ENCODE measurements at regions of chr11 and their contacts with region 1.

Region 1: DNA sequence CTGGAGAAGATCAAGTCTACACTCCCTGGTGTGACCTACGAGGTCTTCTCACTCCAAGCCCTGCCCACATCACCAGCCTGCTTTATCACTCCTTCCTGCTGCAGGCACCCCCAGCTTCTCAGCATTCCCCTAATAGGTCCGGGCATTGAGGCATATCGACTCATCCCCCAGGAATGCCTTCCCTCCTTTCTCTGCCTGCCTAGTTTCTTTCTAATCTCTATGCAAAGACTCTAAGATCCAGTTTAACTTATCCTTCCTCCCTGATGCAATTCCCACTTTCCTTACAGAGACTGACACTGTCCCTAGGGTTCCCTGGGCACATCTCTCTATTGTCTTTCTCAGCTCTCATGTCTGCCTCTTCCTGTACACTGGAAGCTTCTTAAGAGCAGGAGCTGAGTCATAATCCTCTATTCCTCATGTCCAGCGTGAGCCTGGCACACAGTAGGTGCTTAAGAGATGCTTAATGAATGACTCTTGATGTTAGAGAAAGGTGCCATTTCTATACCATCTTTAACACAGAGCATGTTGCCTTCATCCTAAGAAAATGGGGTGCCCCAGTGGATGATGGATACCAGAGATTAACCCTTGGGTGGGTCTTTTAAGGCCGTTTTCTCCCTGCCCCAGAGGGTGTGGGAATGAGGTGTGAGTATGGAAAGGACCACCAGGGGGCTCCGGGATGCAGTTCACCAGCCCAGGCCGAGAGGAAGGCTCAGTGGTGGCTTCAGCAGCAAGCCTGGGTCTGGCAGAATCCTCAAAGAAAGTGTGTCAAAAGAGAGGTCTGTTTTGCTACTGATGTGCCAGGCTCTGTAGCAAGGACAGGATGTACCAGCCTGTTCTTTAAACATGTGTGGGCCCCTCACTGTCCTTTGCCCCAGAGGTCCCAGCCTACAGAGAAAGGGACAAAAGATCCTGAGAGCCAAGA is 34.7 kb downstream of the PARVA start:
- DNase-seq: no peak
- H3K4me3 ChIP-seq: no peak overlapping the region
- H3K27ac ChIP-seq: peak overlapping the region; percentile 42 to 64
- H3K4me1 ChIP-seq: no peaks in the 10 kb centered on the region
- H3K27me3 ChIP-seq: no peaks in the 10 kb centered on the region
- CTCF ChIP-seq: peak; percentile 34 to 70 (median 66)
- POLR2A ChIP-seq: no peak

Region 2: GRCh38 chr11:12377824-12378593 is 34.1 kb before region 1 on chr11:
- intact Hi-C with region 1: loop called (anchors 5 kb)
- DNase-seq: peak; percentile 58
- H3K4me3 ChIP-seq: peak overlapping the region; percentile 68 to 77
- H3K27ac ChIP-seq: peak overlapping the region; percentile 95 to 97
- H3K4me1 ChIP-seq: no peaks in the 10 kb centered on the region
- H3K27me3 ChIP-seq: no peaks in the 10 kb centered on the region
- CTCF ChIP-seq: peak in 2 of 4 experiments; percentile 26 to 42
- POLR2A ChIP-seq: no peak

Region 3: GRCh38 chr11:12598330-12599256 is 186.5 kb after region 1 on chr11:
- intact Hi-C with region 1: no loop called
- DNase-seq: no peak
- H3K4me3 ChIP-seq: no peak overlapping the region
- H3K27ac ChIP-seq: no peak overlapping the region
- H3K4me1 ChIP-seq: no peaks in the 10 kb centered on the region
- H3K27me3 ChIP-seq: no peaks in the 10 kb centered on the region
- CTCF ChIP-seq: no peak
- POLR2A ChIP-seq: no peak

Measured in prostate gland (tissue), 2 donors.